MCF 10A (cell line): ENCODE measurements at regions of chr10 and their contacts with region 1.

Region 1: GRCh38 chr10:1061930-1062774 is 6.0 kb downstream of the WDR37 start:
- DNase-seq: no peak
- H3K4me3 Mint-ChIP-seq: no peak overlapping the region
- H3K27ac Mint-ChIP-seq: no peak overlapping the region
- H3K4me1 Mint-ChIP-seq: peaks cover 18% of the 10 kb centered on the region
- H3K27me3 Mint-ChIP-seq: no peaks in the 10 kb centered on the region
- CTCF ChIP-seq: no peak

Region 2: GRCh38 chr10:725786-726185 is 336.4 kb before region 1 on chr10:
- CTCF ChIA-PET with region 1: no interaction called
- POLR2A ChIA-PET with region 1: no interaction called
- intact Hi-C with region 1: no loop called
- DNase-seq: no peak
- H3K4me3 Mint-ChIP-seq: no peak overlapping the region
- H3K27ac Mint-ChIP-seq: no peak overlapping the region
- H3K4me1 Mint-ChIP-seq: no peaks in the 10 kb centered on the region
- H3K27me3 Mint-ChIP-seq: peaks cover 3% of the 10 kb centered on the region
- CTCF ChIP-seq: no peak

Region 3: DNA sequence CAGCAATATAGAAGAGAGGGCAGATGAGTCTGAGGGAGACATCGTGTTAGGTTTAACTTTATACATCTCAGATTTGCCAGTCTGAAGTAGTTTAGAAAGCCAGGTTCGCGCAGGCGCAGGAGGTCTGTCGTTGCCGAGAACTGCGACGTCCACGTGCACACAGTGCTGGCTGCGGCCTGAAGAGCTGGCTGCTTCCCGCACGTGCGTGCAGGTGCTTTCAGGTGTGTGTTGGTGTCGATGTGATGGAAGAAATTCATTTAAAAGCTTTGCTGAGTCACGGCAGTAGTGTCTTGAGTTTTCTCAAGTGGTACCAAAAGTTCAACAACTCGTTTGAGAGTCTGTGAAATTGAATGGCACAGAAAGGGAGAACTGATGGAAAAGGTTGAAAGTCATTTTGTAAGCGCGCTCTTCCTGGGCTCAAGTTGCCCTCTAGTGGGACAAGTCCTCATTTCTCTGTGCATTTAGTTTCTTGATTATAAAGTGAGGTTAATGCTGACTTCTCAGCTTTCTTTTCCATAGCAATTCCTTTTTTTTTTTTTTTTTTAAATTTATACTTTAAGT is 12.7 kb after region 1 on chr10:
- CTCF ChIA-PET with region 1: interaction called, 5 read pairs
- POLR2A ChIA-PET with region 1: interaction called, 10 read pairs
- intact Hi-C with region 1: no loop called
- DNase-seq: peak; percentile 18
- H3K4me3 Mint-ChIP-seq: no peak overlapping the region
- H3K27ac Mint-ChIP-seq: no peak overlapping the region
- H3K4me1 Mint-ChIP-seq: peaks cover 6% of the 10 kb centered on the region
- H3K27me3 Mint-ChIP-seq: no peaks in the 10 kb centered on the region
- CTCF ChIP-seq: no peak